ENCODE measurements at regions of chr22 and their contacts with region 1.

Region 1: DNA sequence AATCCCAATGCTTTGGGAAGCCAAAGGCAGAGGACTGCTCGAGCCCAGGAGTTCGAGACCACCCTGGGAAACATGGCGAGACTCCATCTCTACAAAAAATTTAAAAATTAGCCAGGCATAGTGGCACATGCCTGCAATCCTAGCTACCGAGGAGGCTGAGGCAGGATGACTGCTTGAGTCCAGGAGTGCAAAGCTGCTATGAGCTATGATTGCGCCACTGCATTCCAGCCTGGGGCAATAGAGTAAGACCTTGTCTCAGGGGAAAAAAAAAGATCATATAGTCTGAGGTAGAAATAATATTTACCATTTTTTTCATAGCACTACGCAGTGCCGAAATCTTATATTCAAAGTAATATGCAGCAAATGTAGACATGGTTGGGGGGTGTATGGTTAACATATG is 47.8 kb downstream of the MRTFA start:
- DNase-seq: no peak
- H3K4me3 ChIP-seq: no peak overlapping the region
- CTCF ChIP-seq: no peak
- POLR2A ChIP-seq: no peak

Region 2: GRCh38 chr22:40525249-40525884 is 63.4 kb before region 1 on chr22:
- intact Hi-C with region 1: loop called (anchors 10 kb)
- DNase-seq: no peak
- H3K4me3 ChIP-seq: no peak overlapping the region
- CTCF ChIP-seq: peak in 1 of 3 donors; percentile 25
- POLR2A ChIP-seq: no peak

Region 3: GRCh38 chr22:40764763-40765441 is 176.2 kb after region 1 on chr22:
- intact Hi-C with region 1: no loop called
- DNase-seq: peak in 1 of 2 donors; percentile 42
- H3K4me3 ChIP-seq: no peak overlapping the region
- CTCF ChIP-seq: no peak
- POLR2A ChIP-seq: no peak

Region 4: DNA sequence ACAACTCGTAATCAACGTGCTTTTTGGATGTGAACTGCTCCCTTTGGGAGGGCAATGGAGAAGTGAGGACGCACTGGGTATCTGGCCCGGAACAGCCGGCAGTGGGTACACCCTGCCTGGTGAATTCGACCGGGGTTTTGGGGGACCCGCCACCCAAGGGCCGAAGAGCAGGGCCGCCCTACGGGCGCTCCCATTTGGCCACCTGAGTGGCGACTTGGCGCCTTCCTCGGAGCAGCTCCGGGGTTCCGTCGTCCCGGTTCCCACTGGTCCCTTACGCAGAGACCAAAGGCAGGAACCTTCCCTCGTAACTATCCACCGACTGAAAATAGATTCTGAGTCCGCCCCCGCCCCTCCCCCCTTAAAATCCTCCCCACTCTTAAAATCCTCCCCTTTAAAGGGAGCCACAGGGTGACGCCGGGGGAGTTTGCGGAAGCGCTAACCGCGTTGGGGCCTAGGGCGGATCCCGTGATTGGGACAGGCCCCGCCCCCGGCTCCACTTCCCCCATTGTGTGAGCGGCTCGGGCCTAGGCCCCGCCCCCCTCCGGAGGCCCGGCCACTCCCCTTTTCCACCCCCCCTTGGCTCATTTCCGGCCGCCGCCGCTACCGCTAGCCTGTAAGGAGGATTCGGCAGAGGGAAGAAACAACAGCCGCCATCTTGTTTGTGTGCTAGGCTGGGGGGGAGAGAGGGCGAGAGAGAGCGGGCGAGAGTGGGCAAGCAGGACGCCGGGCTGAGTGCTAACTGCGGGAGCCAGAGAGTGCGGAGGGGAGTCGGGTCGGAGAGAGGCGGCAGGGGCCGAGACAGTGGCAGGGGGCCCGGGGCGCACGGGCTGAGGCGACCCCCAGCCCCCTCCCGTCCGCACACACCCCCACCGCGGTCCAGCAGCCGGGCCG is 502.7 kb after region 1 on chr22:
- intact Hi-C with region 1: no loop called
- DNase-seq: peak; percentile 98 to 100
- H3K4me3 ChIP-seq: peak overlapping the region; percentile 68
- CTCF ChIP-seq: no peak
- POLR2A ChIP-seq: peak in 1 of 2 donors; percentile 64

Measured in lower leg skin (tissue), 4 donors.